ENCODE measurements at regions of chr1 and their contacts with region 1.

Region 1: GRCh38 chr1:205711104-205712020 is 31.1 kb upstream of the SLC45A3 start:
- DNase-seq: peak; percentile 70
- ATAC-seq: peak; percentile 94
- H3K4me3 Mint-ChIP-seq: no peak overlapping the region
- H3K27ac Mint-ChIP-seq: peak overlapping the region; percentile 59
- H3K4me1 Mint-ChIP-seq: peaks cover 7% of the 10 kb centered on the region
- H3K27me3 Mint-ChIP-seq: no peaks in the 10 kb centered on the region

Region 2: GRCh38 chr1:205528887-205529825 is 182.2 kb before region 1 on chr1:
- CTCF ChIA-PET with region 1: interaction called, 10 read pairs
- DNase-seq: peak; percentile 82
- ATAC-seq: peak; percentile 85
- H3K4me3 Mint-ChIP-seq: no peak overlapping the region
- H3K27ac Mint-ChIP-seq: no peak overlapping the region
- H3K4me1 Mint-ChIP-seq: peaks cover 3% of the 10 kb centered on the region
- H3K27me3 Mint-ChIP-seq: peaks cover 7% of the 10 kb centered on the region

Region 3: DNA sequence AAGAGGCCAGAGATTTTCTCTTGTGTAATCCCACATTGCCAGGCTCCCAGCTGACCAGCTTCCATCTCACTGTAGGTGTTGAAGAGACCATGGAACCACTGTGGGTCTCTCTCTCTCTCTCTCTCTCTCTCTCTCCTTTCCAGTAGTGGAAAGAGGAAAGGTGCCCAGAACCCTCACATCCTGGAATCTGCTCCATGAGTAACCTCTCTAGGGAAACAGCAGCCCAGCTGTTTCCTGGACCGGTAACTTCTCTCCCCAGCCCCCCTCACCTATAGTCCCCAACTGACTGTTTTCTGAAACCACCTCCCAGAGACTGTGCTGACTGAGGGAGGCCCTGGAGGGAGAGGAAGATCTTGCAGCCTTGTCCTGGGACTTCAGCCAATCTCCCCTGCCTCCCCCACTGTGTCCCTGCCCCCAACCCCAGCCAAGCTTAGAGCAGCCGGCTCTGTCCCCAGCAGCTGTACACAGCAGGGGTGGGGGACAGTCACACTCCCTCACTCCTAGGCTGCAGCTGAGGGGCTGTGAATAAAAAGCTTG is 10.4 kb before region 1 on chr1:
- CTCF ChIA-PET with region 1: interaction called, 25 read pairs
- DNase-seq: no peak
- ATAC-seq: no peak
- H3K4me3 Mint-ChIP-seq: no peak overlapping the region
- H3K27ac Mint-ChIP-seq: no peak overlapping the region
- H3K4me1 Mint-ChIP-seq: peaks cover 2% of the 10 kb centered on the region
- H3K27me3 Mint-ChIP-seq: peaks cover 16% of the 10 kb centered on the region

Region 4: GRCh38 chr1:205726619-205727125 is 15.3 kb after region 1 on chr1:
- CTCF ChIA-PET with region 1: interaction called, 26 read pairs
- DNase-seq: no peak
- ATAC-seq: no peak
- H3K4me3 Mint-ChIP-seq: no peak overlapping the region
- H3K27ac Mint-ChIP-seq: no peak overlapping the region
- H3K4me1 Mint-ChIP-seq: peaks cover 19% of the 10 kb centered on the region
- H3K27me3 Mint-ChIP-seq: no peaks in the 10 kb centered on the region

Region 5: GRCh38 chr1:205733438-205734169 is 22.2 kb after region 1 on chr1:
- CTCF ChIA-PET with region 1: interaction called, 10 read pairs
- DNase-seq: no peak
- ATAC-seq: no peak
- H3K4me3 Mint-ChIP-seq: no peak overlapping the region
- H3K27ac Mint-ChIP-seq: peak overlapping the region; percentile 12
- H3K4me1 Mint-ChIP-seq: peaks cover 37% of the 10 kb centered on the region
- H3K27me3 Mint-ChIP-seq: no peaks in the 10 kb centered on the region

Region 6: DNA sequence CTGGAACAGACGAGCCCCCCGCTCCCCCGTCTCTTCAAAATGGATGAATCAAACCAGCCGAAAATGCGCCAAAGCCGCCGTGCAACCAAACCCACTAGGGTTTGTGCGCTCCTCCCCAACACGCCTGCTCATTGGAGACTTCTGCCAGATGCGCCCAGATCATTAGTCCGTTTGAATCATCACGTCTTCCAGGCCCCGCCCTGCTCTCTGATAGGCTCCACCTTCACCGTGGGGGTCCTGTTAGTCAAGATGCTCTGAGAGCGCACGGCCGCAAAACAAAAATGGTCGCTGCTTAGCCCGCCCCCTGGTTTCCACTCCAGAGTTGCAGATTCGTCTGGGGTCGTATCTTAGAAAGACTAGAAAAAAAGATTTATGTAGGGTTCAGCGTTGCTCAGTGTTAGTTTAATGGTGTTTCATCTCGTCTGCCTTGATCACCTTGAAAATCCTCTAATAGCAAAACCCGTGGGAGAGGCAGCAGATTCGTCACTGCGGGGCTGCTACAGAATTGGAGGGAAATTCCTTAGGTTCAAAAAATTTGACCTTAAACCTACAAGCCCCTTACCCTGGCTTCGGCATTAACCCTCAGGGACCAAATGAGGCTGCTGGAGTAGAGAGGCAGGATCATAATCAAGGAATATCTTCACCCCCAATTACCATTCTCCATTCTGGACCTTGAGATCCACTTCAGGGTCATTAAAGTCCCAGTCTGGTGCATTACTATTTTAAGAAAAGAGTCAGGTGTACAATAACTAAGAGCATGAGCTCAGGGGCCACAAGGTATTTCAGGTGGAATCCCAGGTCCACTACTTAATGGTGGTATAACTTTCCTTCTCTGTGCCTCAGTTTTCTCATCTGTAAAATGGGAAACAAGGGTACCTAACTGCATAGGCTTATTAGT is 39.0 kb after region 1 on chr1 and contains the start of gene NUCKS1:
- CTCF ChIA-PET with region 1: interaction called, 10 read pairs
- DNase-seq: peak; percentile 99
- ATAC-seq: peak; percentile 85
- H3K4me3 Mint-ChIP-seq: peak within 1 kb of the TSS; percentile 92
- H3K27ac Mint-ChIP-seq: peak within 1 kb of the TSS; percentile 95
- H3K4me1 Mint-ChIP-seq: peaks cover 38% of the 10 kb centered on the region
- H3K27me3 Mint-ChIP-seq: no peaks in the 10 kb centered on the region
- total RNA-seq, gene NUCKS1: 179 to 211 TPM

Measured in activated CD8-positive, alpha-beta memory T cell treated with anti-CD3 and anti-CD28 coated beads, Interleukin-2, amount 10 ng/mL, durations not matched to agents 7 days and 5 days (primary cell).